CD4-positive, alpha-beta memory T cell (primary cell): ENCODE measurements at regions of chr1 and their contacts with region 1.

Region 1: DNA sequence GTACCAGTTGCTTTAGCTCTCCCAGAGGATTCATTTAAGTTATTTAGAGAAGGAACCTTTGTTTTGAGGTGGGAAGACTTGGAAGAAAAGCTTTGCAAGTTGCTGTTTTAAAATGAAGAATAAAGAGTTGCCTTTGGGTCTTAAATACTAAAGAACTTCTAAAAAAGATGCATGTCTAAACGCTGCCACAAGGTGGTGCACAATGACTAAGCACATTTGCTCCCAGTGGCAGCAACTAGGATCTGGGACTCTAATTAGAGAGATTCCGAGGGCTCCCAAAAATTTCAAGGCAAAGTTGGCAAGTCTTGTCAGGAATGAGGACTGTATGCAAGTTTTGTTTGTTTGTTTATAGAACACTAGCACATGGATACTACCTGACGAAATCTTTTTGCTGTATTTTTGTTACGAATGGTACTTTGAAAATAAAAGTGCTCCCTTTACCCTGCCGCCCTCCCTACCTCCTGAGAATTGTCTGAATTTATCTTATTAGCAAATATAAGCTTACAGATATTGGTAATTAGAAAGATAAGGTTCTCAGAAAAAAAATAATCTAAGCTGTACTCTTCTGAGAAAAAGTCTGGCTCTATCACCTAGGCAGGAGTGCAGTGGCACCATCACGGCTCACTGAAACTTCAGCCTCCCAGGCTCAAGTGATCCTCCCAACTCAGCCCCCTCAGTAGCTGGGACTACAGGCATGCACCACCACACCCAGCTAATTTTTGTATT is 121.8 kb downstream of the HFM1 start:
- DNase-seq: peak; percentile 32 to 38 (median 33)
- H3K4me3 ChIP-seq: no peak overlapping the region
- H3K4me3 Mint-ChIP-seq: no peak overlapping the region
- H3K27ac ChIP-seq: no peak overlapping the region
- H3K27ac Mint-ChIP-seq: no peak overlapping the region
- H3K4me1 ChIP-seq: no peaks in the 10 kb centered on the region
- H3K4me1 Mint-ChIP-seq: no peaks in the 10 kb centered on the region
- H3K27me3 ChIP-seq: no peaks in the 10 kb centered on the region
- H3K27me3 Mint-ChIP-seq: peaks cover 3 to 9% of the 10 kb centered on the region in 2 donors

Region 2: DNA sequence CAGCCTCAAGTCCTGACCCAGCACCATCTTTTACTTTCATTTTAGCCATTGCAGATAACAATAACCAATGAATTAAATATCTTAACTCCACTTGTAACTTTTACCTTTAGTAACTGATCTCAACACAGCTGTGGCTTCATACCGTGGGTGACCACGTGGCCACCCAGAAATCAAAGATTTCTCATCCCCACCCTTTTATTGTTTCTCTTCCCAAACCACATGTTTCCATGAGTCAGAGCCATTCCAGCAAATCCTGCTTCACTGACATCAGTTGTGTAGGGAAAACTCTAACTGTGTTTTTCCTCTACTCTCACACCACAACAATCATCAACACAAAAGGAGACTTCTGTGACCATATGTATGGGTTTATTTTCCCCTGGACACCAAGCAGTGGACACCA is 641.3 kb after region 1 on chr1:
- CTCF ChIA-PET with region 1: interaction called, 68 read pairs
- POLR2A ChIA-PET with region 1: no interaction called
- intact Hi-C with region 1: loop called (anchors 1 kb)
- DNase-seq: no peak
- H3K4me3 ChIP-seq: no peak overlapping the region
- H3K4me3 Mint-ChIP-seq: no peak overlapping the region
- H3K27ac ChIP-seq: no peak overlapping the region
- H3K27ac Mint-ChIP-seq: peak overlapping the region in 1 of 7 donors; percentile 42
- H3K4me1 ChIP-seq: no peaks in the 10 kb centered on the region
- H3K4me1 Mint-ChIP-seq: peaks cover 0 to 7% (median 5%) of the 10 kb centered on the region in 4 donors
- H3K27me3 ChIP-seq: no peaks in the 10 kb centered on the region
- H3K27me3 Mint-ChIP-seq: peaks cover 0 to 2% of the 10 kb centered on the region in 2 donors

Region 3: GRCh38 chr1:92291372-92291999 is 1008.6 kb after region 1 on chr1:
- CTCF ChIA-PET with region 1: interaction called, 3 read pairs
- POLR2A ChIA-PET with region 1: no interaction called
- intact Hi-C with region 1: loop called (anchors 2 kb)
- DNase-seq: peak in 4 of 5 donors; percentile 13 to 32 (median 19)
- H3K4me3 ChIP-seq: no peak overlapping the region
- H3K4me3 Mint-ChIP-seq: no peak overlapping the region
- H3K27ac ChIP-seq: no peak overlapping the region
- H3K27ac Mint-ChIP-seq: peak overlapping the region in 1 of 7 donors; percentile 50
- H3K4me1 ChIP-seq: peaks cover 5% of the 10 kb centered on the region
- H3K4me1 Mint-ChIP-seq: peaks cover 12 to 21% (median 13%) of the 10 kb centered on the region in 4 donors
- H3K27me3 ChIP-seq: no peaks in the 10 kb centered on the region
- H3K27me3 Mint-ChIP-seq: no peaks in the 10 kb centered on the region

Region 4: DNA sequence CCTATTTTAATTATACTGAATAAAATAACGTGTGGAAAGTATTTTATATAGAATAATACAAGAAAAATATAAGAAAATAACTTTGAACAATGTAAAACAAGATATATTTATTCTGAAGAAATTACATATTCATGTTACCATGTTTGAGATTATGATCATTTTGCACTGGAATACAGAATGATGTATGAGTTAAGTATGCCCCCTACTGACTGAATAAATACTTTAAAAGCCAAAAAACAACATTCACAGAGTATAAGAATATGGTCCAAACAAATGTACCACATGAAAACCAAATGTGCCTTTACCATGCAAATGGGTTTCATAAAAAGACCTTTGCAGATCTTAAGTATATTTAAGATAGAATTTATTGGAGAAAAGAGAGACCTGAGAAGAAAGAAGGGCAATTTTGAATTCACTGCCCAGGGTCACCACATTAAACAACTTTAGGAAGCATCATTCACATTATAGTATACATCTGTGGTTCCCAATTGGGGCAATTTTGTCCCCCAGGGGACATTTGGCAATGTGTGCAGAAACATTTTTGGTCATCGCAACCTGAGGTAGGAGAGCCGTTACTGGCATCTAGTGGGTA is 1340.4 kb after region 1 on chr1:
- CTCF ChIA-PET with region 1: no interaction called
- POLR2A ChIA-PET with region 1: no interaction called
- intact Hi-C with region 1: loop called (anchors 5 kb)
- DNase-seq: peak in 4 of 5 donors; percentile 29 to 42 (median 36)
- H3K4me3 ChIP-seq: no peak overlapping the region
- H3K4me3 Mint-ChIP-seq: no peak overlapping the region
- H3K27ac ChIP-seq: no peak overlapping the region
- H3K27ac Mint-ChIP-seq: no peak overlapping the region
- H3K4me1 ChIP-seq: no peaks in the 10 kb centered on the region
- H3K4me1 Mint-ChIP-seq: no peaks in the 10 kb centered on the region
- H3K27me3 ChIP-seq: no peaks in the 10 kb centered on the region
- H3K27me3 Mint-ChIP-seq: no peaks in the 10 kb centered on the region